Activated T-helper 1 cell treated with anti-CD3 and anti-CD28 coated beads, Interleukin-12 subunit alpha, Interleukin-12 subunit beta, Interleukin-2, Interleukin-4 antibody, amounts not matched to agents 30 ng/mL and 10 ng/mL and 1 ng/mL, durations not matched to agents 14 hours and 24 hours and 36 hours (primary cell): ENCODE measurements at regions of chr12 and their contacts with region 1.

Region 1: DNA sequence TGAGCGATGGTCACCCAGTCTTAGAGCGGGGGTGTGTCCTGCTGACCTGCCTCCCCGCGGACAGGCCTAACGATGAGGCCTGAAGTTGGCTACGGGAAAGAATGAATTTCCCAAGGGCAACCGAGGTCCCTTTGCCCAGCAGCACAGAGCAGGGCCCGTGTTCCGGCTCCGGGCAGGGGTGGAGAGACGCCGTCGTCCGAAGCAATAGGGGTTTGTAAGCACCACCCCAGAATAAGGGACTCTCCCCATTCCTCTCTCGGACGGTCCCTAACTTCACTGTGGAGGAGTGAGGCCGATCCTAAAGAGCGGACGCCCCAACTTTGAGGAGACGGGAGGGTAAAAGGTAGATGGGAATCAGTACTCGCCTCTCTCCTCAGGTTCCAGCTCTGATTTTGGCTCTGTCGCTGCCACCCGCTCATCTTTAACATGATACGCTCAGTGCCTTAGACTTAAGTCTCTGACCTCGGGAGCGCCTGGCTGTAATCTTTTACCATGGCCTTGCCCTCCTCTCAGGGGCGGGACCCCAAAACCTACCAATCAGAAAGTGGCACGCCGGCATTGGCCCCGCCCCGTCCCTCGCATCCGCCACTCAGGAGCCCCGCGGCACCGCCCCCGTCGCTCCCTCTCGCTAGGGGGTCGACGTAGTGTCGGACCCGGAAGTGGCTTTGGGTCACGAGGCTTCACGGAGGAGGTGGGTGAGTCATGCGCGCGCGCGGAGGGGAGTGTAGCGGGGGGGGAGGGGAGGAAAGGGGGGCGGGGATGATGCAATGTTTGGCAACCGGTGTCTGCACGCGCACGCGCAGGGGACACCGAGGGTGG is at the start of gene DDIT3:
- DNase-seq: peak; percentile 99
- H3K4me3 Mint-ChIP-seq: peak within 1 kb of the TSS; percentile 97
- H3K27ac Mint-ChIP-seq: peak within 1 kb of the TSS; percentile 100
- H3K4me1 Mint-ChIP-seq: peaks cover 62% of the 10 kb centered on the region
- H3K27me3 Mint-ChIP-seq: no peaks in the 10 kb centered on the region
- total RNA-seq, gene DDIT3: 17.8 and 18.1 TPM in 2 replicates

Region 2: DNA sequence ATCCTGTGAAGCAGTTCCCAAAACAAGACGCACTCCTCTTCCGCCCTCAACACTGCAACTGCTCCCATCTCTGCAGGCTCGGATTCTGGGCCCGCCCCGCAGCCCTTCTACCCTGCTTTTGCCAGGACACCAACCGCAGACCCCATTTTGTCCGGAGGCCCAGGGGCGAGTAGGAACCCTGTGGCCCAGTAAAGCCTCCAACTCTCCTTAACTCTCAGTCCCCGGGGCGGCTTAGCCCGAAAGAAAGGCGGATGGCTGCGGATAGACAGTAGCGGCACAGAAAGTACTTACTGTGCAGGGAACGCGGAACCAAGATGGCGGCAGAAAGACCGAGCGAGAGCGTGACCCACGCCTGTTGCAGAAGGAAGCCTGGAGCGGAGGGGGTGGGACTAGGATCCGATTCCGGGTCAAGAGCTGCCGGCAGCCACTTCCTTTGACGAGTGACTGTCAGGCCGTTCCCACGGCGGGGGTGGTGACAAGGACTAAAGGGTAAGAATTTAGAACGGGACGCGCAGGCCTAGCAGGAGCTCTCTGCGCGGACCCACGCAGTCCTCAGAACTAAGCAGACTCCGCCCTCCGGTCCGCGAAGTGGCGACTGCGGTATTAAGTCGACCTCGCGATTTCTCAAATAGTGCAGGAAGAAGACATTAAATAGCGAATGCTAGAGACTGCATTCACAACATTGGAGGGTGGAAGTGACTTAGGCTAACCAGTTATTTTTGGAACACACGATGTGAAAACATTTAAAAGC is 795.1 kb before region 1 on chr12 and contains the start of gene NACA:
- intact Hi-C with region 1: loop called (anchors 2 kb)
- DNase-seq: peak; percentile 98
- H3K4me3 Mint-ChIP-seq: peak within 1 kb of the TSS; percentile 91
- H3K27ac Mint-ChIP-seq: peak within 1 kb of the TSS; percentile 91
- H3K4me1 Mint-ChIP-seq: peaks cover 48% of the 10 kb centered on the region
- H3K27me3 Mint-ChIP-seq: peaks cover 1% of the 10 kb centered on the region
- total RNA-seq, gene NACA: 942 and 963 TPM in 2 replicates

Region 3: GRCh38 chr12:57462251-57462911 is 57.9 kb before region 1 on chr12:
- intact Hi-C with region 1: loop called (anchors 1 kb)
- DNase-seq: peak; percentile 85
- H3K4me3 Mint-ChIP-seq: peak overlapping the region; percentile 86
- H3K27ac Mint-ChIP-seq: peak overlapping the region; percentile 72
- H3K4me1 Mint-ChIP-seq: peaks cover 60% of the 10 kb centered on the region
- H3K27me3 Mint-ChIP-seq: peaks cover 21% of the 10 kb centered on the region

Region 4: GRCh38 chr12:57534991-57535543 is 14.8 kb after region 1 on chr12:
- intact Hi-C with region 1: no loop called
- DNase-seq: no peak
- H3K4me3 Mint-ChIP-seq: no peak overlapping the region
- H3K27ac Mint-ChIP-seq: no peak overlapping the region
- H3K4me1 Mint-ChIP-seq: peaks cover 5% of the 10 kb centered on the region
- H3K27me3 Mint-ChIP-seq: no peaks in the 10 kb centered on the region

Region 5: GRCh38 chr12:57546438-57547383 is 26.4 kb after region 1 on chr12 and contains the start of gene DCTN2:
- intact Hi-C with region 1: loop called (anchors 1 kb)
- DNase-seq: peak; percentile 93
- H3K4me3 Mint-ChIP-seq: peak within 1 kb of the TSS; percentile 100
- H3K27ac Mint-ChIP-seq: peak within 1 kb of the TSS; percentile 97
- H3K4me1 Mint-ChIP-seq: peaks cover 49% of the 10 kb centered on the region
- H3K27me3 Mint-ChIP-seq: peaks cover 13% of the 10 kb centered on the region
- total RNA-seq, gene DCTN2: 78.6 and 83.5 TPM in 2 replicates

Region 6: GRCh38 chr12:57744777-57745484 is 224.7 kb after region 1 on chr12 and contains the start of gene TSPAN31:
- intact Hi-C with region 1: loop called (anchors 1 kb)
- DNase-seq: peak; percentile 90
- H3K4me3 Mint-ChIP-seq: peak within 1 kb of the TSS; percentile 94
- H3K27ac Mint-ChIP-seq: peak within 1 kb of the TSS; percentile 92
- H3K4me1 Mint-ChIP-seq: peaks cover 63% of the 10 kb centered on the region
- H3K27me3 Mint-ChIP-seq: no peaks in the 10 kb centered on the region
- total RNA-seq, gene TSPAN31: 24.0 and 24.5 TPM in 2 replicates

Region 7: DNA sequence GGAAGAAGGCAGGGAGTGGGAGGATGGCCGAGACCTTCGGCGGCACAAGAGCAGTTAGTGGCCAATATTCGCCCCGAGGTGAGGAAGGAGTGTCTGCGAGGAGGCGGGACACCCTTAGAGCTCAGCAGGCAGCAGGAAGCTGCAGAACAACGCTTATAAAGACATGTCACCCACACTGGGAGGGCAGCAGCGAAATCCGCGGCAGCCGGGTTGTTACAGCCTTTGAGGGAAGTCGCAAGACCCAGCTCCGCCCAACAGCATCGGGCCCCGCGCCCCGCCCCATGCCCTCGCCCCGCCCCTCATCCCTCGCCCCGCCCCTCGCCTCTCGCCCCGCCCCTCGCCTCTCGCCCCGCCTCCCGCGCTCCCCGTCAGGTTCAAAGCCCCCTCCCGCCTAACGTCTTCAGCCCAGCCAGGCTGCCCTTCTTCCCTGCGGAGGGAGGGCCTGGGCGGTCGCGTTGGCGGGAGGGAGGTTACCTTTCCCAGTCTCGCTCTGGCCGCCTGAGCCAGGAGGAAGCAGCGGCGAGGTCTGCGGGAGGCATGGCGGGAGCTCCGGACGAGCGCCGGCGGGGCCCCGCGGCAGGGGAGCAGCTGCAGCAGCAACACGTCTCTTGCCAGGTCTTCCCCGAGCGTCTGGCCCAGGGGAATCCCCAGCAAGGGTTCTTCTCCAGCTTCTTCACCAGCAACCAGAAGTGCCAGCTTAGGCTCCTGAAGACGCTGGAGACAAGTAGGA is 421.1 kb after region 1 on chr12 and contains the start of gene ATP23:
- intact Hi-C with region 1: loop called (anchors 2 kb)
- DNase-seq: peak; percentile 86
- H3K4me3 Mint-ChIP-seq: peak within 1 kb of the TSS; percentile 89
- H3K27ac Mint-ChIP-seq: peak within 1 kb of the TSS; percentile 95
- H3K4me1 Mint-ChIP-seq: peaks cover 46% of the 10 kb centered on the region
- H3K27me3 Mint-ChIP-seq: no peaks in the 10 kb centered on the region
- total RNA-seq, gene ATP23: 7.3 and 8.7 TPM in 2 replicates